Posterior vena cava (tissue), 2 donors: ENCODE measurements at regions of chr20 and their contacts with region 1.

Region 1: GRCh38 chr20:21505161-21505809 is 8.6 kb downstream of the NKX2-2 start:
- DNase-seq: no peak

Region 2: DNA sequence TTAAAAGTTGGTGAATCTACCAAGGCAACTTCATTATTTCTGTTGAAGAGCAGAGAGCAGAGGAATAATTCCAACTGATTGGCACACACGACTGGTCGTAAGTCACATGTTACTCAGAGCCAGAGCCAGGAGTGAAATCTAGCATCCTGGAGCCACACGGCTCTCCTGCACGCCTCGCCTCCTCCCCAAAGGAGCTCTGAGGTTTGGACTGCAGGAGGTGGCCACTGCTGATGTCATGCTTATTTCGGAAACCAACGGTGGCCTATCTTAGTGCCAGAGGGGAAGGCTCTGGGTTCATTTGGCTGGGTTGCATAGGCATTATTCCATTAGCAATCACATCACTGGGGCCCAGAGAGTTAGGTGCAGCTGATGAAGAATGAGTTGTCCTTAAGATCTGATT is 669.4 kb before region 1 on chr20:
- intact Hi-C with region 1: loop called in 1 of 2 experiments (anchors 1 kb)
- DNase-seq: no peak

Region 3: DNA sequence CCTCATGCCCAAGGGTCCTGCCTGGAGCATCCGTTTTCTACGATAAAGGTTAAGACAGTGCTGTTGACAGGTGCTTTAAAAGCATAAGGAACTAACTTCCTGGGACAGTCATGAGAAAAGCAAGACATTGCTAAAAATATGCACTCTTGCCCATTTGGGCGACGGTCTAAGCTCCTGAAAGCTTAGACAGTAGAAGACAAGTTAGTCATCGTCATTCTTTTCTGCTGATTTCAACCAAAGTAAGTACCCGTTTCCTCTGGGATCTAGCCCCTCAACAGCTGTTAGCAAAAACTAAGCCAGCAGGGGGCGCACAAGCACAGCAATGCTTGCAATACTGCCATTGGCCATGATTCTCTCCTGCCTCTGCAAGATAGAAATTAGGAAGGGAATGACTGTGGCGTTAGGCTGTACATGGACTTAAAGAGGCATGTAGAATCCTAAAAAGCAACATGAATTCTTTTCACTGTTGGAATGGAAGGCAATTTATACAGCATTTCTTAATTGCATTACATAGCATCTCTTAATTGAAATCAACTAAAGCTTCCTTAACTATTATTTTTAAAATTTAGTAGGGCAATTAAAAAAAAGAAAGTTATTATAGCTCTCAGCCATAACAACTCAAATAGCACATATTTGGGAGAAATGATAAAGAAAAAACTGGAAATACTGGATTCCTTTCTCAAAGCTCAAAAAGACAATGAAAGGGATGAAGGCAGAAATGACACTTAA is 645.0 kb before region 1 on chr20:
- intact Hi-C with region 1: loop called in 1 of 2 experiments (anchors 10 kb)
- DNase-seq: peak; percentile 96

Region 4: DNA sequence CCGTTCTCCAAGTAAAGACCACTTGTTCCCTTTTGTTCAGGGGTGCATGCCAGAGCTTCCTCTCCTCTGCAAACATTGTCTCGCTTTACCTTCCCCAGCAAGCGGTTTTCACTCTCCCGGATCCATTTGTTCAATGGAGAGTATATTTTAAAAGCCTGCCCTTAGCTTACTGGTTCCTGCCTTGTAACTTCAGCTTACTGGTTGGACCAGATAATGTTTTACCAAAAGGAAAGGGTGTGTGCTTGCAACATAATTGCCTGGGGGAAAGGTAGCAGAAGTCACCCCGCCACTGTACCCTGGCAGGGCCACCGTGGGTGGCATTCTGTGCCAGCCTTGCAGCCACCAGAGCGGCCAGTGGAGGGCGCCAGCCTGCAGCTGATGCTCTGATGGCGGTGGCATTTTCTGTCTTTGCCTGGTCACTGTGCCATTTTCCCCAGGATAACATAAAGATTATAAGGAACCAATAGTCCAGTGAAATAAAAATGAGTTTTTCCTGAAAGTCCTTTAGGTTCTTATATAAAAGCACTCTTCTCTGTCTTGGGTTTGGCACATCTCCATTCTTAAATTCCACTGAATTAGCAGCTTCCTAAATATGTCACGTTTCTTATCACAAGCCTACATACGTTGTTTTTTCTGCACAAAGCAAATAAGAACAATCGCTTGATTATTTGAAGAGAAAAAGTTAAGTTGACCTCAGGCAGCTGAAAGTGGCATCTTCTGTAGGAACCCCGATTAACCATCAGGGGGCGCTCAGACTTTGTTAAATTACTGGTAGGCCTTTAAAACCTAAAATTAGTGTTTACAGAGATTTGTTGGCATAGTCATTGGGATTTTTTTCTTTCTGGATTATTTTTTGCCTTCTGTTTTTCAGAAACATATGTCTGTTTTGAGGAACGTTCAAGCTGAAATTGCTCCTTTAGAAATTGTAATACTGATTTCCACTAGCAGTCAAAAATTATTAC is 269.5 kb before region 1 on chr20:
- intact Hi-C with region 1: loop called (anchors 5 to 10 kb)
- DNase-seq: no peak

Region 5: GRCh38 chr20:21450572-21450971 is 54.7 kb before region 1 on chr20:
- intact Hi-C with region 1: no loop called
- DNase-seq: no peak